ENCODE measurements at regions of chr2 and their contacts with region 1.

Region 1: DNA sequence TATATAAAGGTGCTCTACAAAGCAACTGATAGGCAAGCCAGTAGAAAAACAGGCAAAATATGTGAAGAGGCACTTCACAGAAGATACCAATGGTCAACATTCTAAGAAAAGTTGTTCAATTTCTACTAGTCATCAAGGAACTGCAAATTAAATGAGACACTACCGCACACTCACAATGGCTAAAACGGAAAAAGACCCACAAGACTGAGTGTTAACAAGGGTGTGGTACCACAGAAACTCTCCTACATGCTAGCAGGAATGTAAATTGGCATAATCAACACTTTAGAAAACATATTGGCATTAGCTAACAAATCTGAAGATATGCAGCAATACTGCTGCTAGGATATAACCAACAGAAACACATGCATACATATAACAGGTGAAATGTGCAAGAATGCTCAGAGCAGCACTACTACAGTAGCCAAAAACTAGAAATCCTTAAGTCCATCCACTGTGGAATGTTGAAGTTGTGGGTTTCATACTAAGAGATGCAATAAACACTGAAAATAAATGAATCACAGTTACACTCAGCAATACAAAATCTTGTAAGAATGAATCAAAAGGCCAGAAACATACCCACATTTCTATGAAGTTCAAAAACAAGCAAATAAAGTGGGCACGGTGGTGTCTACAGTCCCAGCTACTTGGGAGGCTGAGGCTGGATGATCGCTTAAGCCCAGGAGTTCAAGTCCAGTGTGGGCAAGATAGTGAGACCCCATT is 9.2 kb downstream of the RNU4ATAC start:
- DNase-seq: no peak
- ATAC-seq: no peak
- H3K4me3 ChIP-seq: no peak overlapping the region
- H3K27ac ChIP-seq: peak overlapping the region in 2 of 10 donors; percentile 32 to 40
- H3K4me1 ChIP-seq: peaks cover 3 to 80% (median 59%) of the 10 kb centered on the region in 9 donors
- H3K27me3 ChIP-seq: no peaks in the 10 kb centered on the region
- CTCF ChIP-seq: no peak

Region 2: GRCh38 chr2:121591199-121591598 is 51.3 kb after region 1 on chr2:
- intact Hi-C with region 1: loop called in 3 of 10 experiments (anchors 5 to 10 kb)
- DNase-seq: no peak
- ATAC-seq: no peak
- H3K4me3 ChIP-seq: no peak overlapping the region
- H3K27ac ChIP-seq: no peak overlapping the region
- H3K4me1 ChIP-seq: peaks cover 2 to 34% (median 17%) of the 10 kb centered on the region in 9 donors
- H3K27me3 ChIP-seq: no peaks in the 10 kb centered on the region
- CTCF ChIP-seq: no peak